Activated CD8-positive, alpha-beta memory T cell treated with anti-CD3 and anti-CD28 coated beads, Interleukin-2, amount 10 ng/mL, durations not matched to agents 7 days and 5 days (primary cell): ENCODE measurements at regions of chr1 and their contacts with region 1.

Region 1: DNA sequence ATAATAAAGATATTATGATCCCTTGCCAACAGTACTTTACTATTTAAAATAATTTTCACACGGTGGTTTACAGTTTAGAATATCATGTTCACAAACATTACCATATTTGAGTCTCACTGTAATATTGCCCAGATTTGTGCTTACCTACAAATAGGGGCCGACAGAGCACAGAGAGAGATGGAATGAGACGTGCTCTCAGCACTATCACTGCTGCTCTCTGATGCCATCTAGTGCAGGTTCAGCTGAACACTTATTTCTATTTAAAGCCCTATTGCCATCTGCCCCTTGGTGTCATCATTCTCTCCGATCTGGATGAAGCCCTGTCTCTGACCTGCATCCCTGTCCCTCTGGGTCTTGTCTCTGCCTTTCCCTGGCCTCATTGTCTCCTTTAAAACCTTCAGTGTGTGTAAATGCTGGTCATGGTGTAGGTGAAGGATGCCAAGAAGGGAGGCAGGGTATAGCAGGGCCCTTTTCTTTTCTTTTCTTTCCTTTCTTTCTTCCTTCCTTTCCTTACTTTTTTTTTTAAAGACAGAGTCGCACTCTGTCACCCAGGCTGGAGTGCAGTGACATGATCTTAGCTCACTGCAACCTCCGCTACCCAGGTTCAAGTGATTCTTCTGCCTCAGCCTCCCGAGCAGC is 6.9 kb upstream of the GPATCH4 start:
- DNase-seq: peak; percentile 81
- ATAC-seq: peak; percentile 94
- H3K4me3 Mint-ChIP-seq: no peak overlapping the region
- H3K27ac Mint-ChIP-seq: no peak overlapping the region
- H3K4me1 Mint-ChIP-seq: peaks cover 11% of the 10 kb centered on the region
- H3K27me3 Mint-ChIP-seq: peaks cover 19% of the 10 kb centered on the region

Region 2: DNA sequence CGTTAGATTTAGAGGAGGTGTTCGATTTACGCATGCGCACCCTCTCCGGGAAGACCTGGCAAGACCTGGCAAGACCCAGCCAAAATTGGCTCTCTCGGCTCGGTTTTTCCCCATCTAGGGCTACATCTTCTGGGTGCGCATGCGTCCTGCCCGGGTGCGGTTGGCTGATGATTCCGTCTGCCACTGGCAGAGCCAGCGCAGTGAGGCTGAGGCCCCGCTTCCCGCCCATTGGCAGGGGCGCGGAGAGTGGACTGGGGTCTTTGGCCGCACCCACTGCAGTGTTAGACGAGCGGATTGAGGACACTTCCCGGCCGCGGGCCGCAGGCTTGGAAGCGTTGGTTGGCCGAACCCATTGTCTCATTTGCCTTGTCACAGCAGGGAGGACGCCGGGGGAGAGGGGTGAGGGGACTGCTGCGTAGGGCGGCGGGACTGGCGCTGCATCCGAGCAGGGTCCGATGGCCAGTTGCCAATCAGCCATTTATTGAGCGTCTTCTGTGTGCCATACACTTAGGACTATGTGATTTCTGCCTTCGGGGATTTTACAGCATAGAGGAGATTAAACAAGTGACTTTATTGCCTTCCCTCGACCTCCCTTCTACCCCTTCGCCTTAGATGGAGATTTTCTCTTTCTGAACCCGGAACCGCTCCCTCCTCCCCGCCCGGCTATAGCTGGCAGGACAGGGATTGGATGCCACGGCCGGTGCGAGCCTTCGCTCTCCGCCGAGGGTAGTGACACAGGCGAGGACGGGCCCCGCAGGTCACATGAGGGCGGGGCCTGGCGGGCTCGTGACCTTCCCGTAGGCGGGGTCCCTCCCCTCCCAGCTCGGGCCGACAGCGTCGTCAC is 151.3 kb before region 1 on chr1:
- CTCF ChIA-PET with region 1: interaction called, 15 read pairs
- DNase-seq: peak; percentile 97
- ATAC-seq: peak; percentile 92
- H3K4me3 Mint-ChIP-seq: peak overlapping the region; percentile 86
- H3K27ac Mint-ChIP-seq: peak overlapping the region; percentile 95
- H3K4me1 Mint-ChIP-seq: peaks cover 31% of the 10 kb centered on the region
- H3K27me3 Mint-ChIP-seq: peaks cover 7% of the 10 kb centered on the region

Region 3: DNA sequence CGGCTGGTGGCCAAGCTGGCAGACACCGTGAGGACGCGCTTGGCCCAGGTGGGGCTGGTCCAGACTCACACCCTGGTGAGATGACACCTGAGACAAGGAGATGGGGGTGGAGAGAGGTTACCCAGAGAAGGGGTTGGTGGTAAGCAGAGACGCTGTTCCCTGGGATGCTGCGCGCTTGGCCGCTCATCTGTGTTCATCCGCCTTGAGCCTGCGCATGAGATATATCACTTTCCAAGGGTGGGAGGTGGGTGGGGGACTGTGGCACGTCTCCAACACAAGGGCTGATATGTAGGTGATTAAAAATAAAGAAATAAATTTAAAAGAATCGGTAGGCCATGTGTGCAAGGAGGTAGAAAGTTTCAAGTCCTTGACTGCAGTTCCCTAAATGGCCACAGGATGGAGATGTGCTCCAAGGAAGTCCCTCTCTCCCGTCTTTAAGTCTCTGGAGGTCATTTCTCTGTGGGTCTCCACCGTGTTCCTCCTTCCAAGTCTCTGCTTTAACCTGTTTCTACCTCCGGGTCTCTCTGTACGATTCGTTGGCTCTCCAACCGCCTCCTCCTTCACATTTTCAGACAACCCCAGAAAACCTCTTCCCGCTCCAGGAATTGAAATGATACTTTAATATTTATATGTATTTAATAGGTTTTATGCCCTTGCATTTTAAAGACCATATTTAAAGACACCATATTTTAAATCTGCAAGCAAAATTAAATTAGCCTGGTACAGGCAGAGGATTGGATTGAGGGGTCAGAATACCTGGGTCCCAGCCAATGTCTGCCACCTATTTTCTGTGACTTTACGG is 24.1 kb before region 1 on chr1:
- CTCF ChIA-PET with region 1: interaction called, 30 read pairs
- DNase-seq: peak; percentile 86
- ATAC-seq: peak; percentile 35
- H3K4me3 Mint-ChIP-seq: peak overlapping the region; percentile 82
- H3K27ac Mint-ChIP-seq: no peak overlapping the region
- H3K4me1 Mint-ChIP-seq: peaks cover 22% of the 10 kb centered on the region
- H3K27me3 Mint-ChIP-seq: no peaks in the 10 kb centered on the region

Region 4: DNA sequence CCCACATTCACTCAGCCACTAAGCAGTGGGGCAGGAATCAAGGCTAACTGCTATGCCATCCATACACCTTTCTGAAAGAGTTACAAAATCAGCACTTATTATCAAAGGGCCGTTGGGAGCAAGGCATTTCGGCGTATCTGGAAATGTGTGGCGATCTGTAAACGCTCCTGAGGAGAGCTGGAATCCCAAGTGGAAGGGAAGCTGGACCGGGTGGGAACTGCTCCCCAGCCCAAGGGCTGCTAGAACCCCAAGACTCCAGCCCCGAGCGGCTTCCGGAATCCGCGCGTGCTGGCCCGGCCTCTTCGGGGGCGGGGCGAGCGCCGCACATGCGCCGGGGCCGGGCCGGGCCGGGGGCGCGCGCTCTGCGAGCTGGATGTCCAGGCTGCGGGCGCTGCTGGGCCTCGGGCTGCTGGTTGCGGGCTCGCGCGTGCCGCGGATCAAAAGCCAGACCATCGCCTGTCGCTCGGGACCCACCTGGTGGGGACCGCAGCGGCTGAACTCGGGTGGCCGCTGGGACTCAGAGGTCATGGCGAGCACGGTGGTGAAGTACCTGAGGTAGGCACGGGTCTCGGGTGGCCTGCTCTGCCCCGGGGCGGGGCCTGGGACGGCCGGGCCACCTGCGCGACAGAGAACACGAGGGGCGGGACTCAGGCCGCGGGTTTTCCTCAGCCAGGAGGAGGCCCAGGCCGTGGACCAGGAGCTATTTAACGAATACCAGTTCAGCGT is 16.6 kb before region 1 on chr1 and contains the start of gene NAXE:
- CTCF ChIA-PET with region 1: interaction called, 24 read pairs
- DNase-seq: peak; percentile 77
- ATAC-seq: peak; percentile 98
- H3K4me3 Mint-ChIP-seq: peak within 1 kb of the TSS; percentile 83
- H3K27ac Mint-ChIP-seq: peak within 1 kb of the TSS; percentile 88
- H3K4me1 Mint-ChIP-seq: peaks cover 28% of the 10 kb centered on the region
- H3K27me3 Mint-ChIP-seq: no peaks in the 10 kb centered on the region
- total RNA-seq, gene NAXE: 62.7 to 66.6 TPM

Region 5: GRCh38 chr1:156625436-156626078 is 17.4 kb after region 1 on chr1:
- CTCF ChIA-PET with region 1: interaction called, 73 read pairs
- DNase-seq: peak; percentile 64
- ATAC-seq: peak; percentile 64
- H3K4me3 Mint-ChIP-seq: no peak overlapping the region
- H3K27ac Mint-ChIP-seq: no peak overlapping the region
- H3K4me1 Mint-ChIP-seq: peaks cover 8% of the 10 kb centered on the region
- H3K27me3 Mint-ChIP-seq: peaks cover 68% of the 10 kb centered on the region

Region 6: GRCh38 chr1:156639601-156640101 is 31.5 kb after region 1 on chr1:
- CTCF ChIA-PET with region 1: no interaction called
- DNase-seq: no peak
- ATAC-seq: no peak
- H3K4me3 Mint-ChIP-seq: no peak overlapping the region
- H3K27ac Mint-ChIP-seq: no peak overlapping the region
- H3K4me1 Mint-ChIP-seq: peaks cover 36% of the 10 kb centered on the region
- H3K27me3 Mint-ChIP-seq: peaks cover 88% of the 10 kb centered on the region

Region 7: DNA sequence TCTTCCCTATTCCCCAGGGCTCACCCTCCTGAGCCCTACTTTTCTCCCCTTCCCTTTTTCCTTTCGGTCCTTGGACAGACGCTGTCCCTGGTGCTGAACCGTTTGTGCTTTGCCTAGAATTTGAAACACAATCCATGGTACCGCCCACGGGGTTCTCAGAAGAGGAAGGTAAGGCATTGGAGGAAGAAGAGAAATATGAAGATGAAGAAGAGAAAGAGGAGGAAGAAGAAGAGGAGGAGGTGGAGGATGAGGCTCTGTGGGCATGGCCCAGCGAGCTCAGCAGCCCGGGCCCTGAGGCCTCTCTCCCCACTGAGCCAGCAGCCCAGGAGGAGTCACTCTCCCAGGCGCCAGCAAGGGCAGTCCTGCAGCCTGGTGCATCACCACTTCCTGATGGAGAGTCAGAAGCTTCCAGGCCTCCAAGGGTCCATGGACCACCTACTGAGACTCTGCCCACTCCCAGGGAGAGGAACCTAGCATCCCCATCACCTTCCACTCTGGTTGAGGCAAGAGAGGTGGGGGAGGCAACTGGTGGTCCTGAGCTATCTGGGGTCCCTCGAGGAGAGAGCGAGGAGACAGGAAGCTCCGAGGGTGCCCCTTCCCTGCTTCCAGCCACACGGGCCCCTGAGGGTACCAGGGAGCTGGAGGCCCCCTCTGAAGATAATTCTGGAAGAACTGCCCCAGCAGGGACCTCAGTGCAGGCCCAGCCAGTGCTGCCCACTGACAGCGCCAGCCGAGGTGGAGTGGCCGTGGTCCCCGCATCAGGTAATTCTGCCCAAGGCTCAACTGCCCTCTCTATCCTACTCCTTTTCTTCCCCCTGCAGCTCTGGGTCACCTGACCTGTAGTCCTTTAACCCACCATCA is 44.2 kb after region 1 on chr1:
- CTCF ChIA-PET with region 1: no interaction called
- DNase-seq: no peak
- ATAC-seq: no peak
- H3K4me3 Mint-ChIP-seq: no peak overlapping the region
- H3K27ac Mint-ChIP-seq: no peak overlapping the region
- H3K4me1 Mint-ChIP-seq: peaks cover 7% of the 10 kb centered on the region
- H3K27me3 Mint-ChIP-seq: peaks cover 89% of the 10 kb centered on the region